ENCODE measurements at regions of chr3 and their contacts with region 1.

Region 1: GRCh38 chr3:108589146-108589997 is at the starts of genes CIP2A and DZIP3:
- DNase-seq: peak; percentile 88
- ATAC-seq: peak; percentile 91
- H3K4me3 Mint-ChIP-seq: peak within 1 kb of the TSS; percentile 100
- H3K27ac Mint-ChIP-seq: peak within 1 kb of the TSS; percentile 99
- H3K4me1 Mint-ChIP-seq: peaks cover 40% of the 10 kb centered on the region
- H3K27me3 Mint-ChIP-seq: no peaks in the 10 kb centered on the region
- total RNA-seq, gene CIP2A: 41.6 to 48.4 TPM
- total RNA-seq, gene DZIP3: 25.2 to 29.9 TPM

Region 2: GRCh38 chr3:108602249-108602934 is 13.0 kb after region 1 on chr3:
- POLR2A ChIA-PET with region 1: interaction called, 151 read pairs
- DNase-seq: no peak
- ATAC-seq: peak; percentile 85
- H3K4me3 Mint-ChIP-seq: peak overlapping the region; percentile 71
- H3K27ac Mint-ChIP-seq: peak overlapping the region; percentile 89
- H3K4me1 Mint-ChIP-seq: peaks cover 37% of the 10 kb centered on the region
- H3K27me3 Mint-ChIP-seq: no peaks in the 10 kb centered on the region